CD14-positive monocyte (primary cell): ENCODE measurements at regions of chr9 and their contacts with region 1.

Region 1: GRCh38 chr9:105281926-105282325 is 37.5 kb downstream of the SLC44A1 start:
- DNase-seq: no peak
- H3K4me3 ChIP-seq: no peak overlapping the region
- H3K4me3 Mint-ChIP-seq: no peak overlapping the region
- H3K27ac ChIP-seq: no peak overlapping the region
- H3K27ac Mint-ChIP-seq: no peak overlapping the region
- H3K4me1 ChIP-seq: no peaks in the 10 kb centered on the region
- H3K4me1 Mint-ChIP-seq: peaks cover 19% of the 10 kb centered on the region
- H3K27me3 ChIP-seq: no peaks in the 10 kb centered on the region
- H3K27me3 Mint-ChIP-seq: no peaks in the 10 kb centered on the region
- CTCF ChIP-seq: no peak

Region 2: GRCh38 chr9:105157130-105157583 is 124.8 kb before region 1 on chr9:
- intact Hi-C with region 1: no loop called
- DNase-seq: peak; percentile 71 to 89 (median 82)
- H3K4me3 ChIP-seq: no peak overlapping the region
- H3K4me3 Mint-ChIP-seq: no peak overlapping the region
- H3K27ac ChIP-seq: no peak overlapping the region
- H3K27ac Mint-ChIP-seq: peak overlapping the region in 6 of 7 donors; percentile 11 to 83 (median 48)
- H3K4me1 ChIP-seq: peaks cover 18 to 29% of the 10 kb centered on the region in 2 donors
- H3K4me1 Mint-ChIP-seq: peaks cover 21% of the 10 kb centered on the region
- H3K27me3 ChIP-seq: no peaks in the 10 kb centered on the region
- H3K27me3 Mint-ChIP-seq: peaks cover 0 to 2% (median 2%) of the 10 kb centered on the region in 3 donors
- CTCF ChIP-seq: peak; percentile 62

Region 3: GRCh38 chr9:105216440-105217178 is 65.3 kb before region 1 on chr9:
- intact Hi-C with region 1: no loop called
- DNase-seq: no peak
- H3K4me3 ChIP-seq: no peak overlapping the region
- H3K4me3 Mint-ChIP-seq: no peak overlapping the region
- H3K27ac ChIP-seq: no peak overlapping the region
- H3K27ac Mint-ChIP-seq: no peak overlapping the region
- H3K4me1 ChIP-seq: no peaks in the 10 kb centered on the region
- H3K4me1 Mint-ChIP-seq: no peaks in the 10 kb centered on the region
- H3K27me3 ChIP-seq: no peaks in the 10 kb centered on the region
- H3K27me3 Mint-ChIP-seq: peaks cover 0 to 5% (median 3%) of the 10 kb centered on the region in 3 donors
- CTCF ChIP-seq: no peak

Region 4: DNA sequence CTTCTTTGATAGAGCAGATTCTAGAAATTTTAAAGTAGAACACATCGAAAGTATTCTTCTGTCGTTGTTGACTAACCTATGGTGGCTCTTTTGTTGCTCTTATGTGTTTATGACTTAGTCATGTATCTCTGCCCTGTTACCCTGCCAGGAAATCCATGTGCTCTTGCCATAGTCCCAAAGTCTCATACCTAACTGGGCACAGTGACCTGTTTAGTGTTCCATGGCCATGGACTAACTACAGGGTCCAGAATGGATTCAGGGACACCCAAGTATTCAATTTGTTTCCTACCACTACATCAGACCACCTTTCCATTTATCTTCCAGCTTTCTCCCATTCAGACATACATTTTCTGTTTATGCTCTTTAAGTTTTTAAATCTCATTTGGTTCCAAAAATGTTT is 19.4 kb before region 1 on chr9:
- intact Hi-C with region 1: loop called in 1 of 2 experiments (anchors 2 kb)
- DNase-seq: no peak
- H3K4me3 ChIP-seq: no peak overlapping the region
- H3K4me3 Mint-ChIP-seq: no peak overlapping the region
- H3K27ac ChIP-seq: no peak overlapping the region
- H3K27ac Mint-ChIP-seq: peak overlapping the region in 1 of 7 donors; percentile 7
- H3K4me1 ChIP-seq: peaks cover 10 to 12% of the 10 kb centered on the region in 2 donors
- H3K4me1 Mint-ChIP-seq: peaks cover 36% of the 10 kb centered on the region
- H3K27me3 ChIP-seq: no peaks in the 10 kb centered on the region
- H3K27me3 Mint-ChIP-seq: peaks cover 0 to 1% (median 0%) of the 10 kb centered on the region in 3 donors
- CTCF ChIP-seq: no peak

Region 5: GRCh38 chr9:105355781-105356180 is 73.9 kb after region 1 on chr9:
- intact Hi-C with region 1: no loop called
- DNase-seq: no peak
- H3K4me3 ChIP-seq: no peak overlapping the region
- H3K4me3 Mint-ChIP-seq: no peak overlapping the region
- H3K27ac ChIP-seq: no peak overlapping the region
- H3K27ac Mint-ChIP-seq: no peak overlapping the region
- H3K4me1 ChIP-seq: no peaks in the 10 kb centered on the region
- H3K4me1 Mint-ChIP-seq: no peaks in the 10 kb centered on the region
- H3K27me3 ChIP-seq: no peaks in the 10 kb centered on the region
- H3K27me3 Mint-ChIP-seq: peaks cover 0 to 3% (median 0%) of the 10 kb centered on the region in 3 donors
- CTCF ChIP-seq: no peak

Region 6: DNA sequence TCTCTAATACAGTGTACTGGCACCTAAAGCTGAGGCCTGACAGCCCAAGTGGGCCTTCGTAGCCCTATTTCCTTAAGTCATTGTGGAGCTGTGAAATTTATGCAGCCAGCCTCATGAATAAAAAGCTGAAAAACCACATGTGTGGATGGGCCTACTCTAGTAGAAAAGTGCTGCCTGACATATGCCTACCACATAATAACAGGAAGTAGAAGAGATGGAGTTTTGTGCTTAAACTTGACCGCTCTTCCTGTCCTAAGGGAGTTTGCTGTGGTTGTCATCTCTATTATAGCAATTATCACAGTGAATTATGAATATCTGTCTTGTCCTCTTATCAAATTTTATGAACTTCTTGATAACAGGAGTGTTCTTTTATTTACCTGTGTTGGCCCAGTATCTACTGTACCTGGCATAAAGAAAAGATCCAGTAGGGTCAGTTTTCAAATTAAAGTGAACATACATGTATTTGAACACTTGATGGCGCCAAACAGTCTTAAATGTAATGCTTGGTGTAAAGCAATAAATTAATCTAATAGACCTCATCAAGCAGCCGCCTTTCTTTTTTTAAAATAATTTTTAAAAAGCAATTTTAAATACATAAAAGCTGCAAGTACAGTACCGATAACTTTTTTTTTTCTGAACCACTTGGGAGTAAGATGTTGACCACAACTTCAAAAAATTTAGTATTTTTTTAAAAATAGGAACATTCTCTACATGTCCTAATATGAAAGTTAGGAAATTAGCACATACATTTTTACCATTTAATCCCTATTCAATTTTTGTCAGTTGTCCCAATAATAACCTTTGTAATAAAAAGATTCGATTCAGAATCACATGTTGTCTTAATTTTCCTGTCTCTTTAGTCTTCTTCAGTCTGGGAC is 327.0 kb after region 1 on chr9:
- intact Hi-C with region 1: no loop called
- DNase-seq: peak; percentile 7 to 50 (median 26)
- H3K4me3 ChIP-seq: no peak overlapping the region
- H3K4me3 Mint-ChIP-seq: no peak overlapping the region
- H3K27ac ChIP-seq: no peak overlapping the region
- H3K27ac Mint-ChIP-seq: no peak overlapping the region
- H3K4me1 ChIP-seq: no peaks in the 10 kb centered on the region
- H3K4me1 Mint-ChIP-seq: no peaks in the 10 kb centered on the region
- H3K27me3 ChIP-seq: no peaks in the 10 kb centered on the region
- H3K27me3 Mint-ChIP-seq: no peaks in the 10 kb centered on the region
- CTCF ChIP-seq: peak; percentile 66